Right cardiac atrium (tissue), 5 donors: ENCODE measurements at regions of chr1 and their contacts with region 1.

Region 1: DNA sequence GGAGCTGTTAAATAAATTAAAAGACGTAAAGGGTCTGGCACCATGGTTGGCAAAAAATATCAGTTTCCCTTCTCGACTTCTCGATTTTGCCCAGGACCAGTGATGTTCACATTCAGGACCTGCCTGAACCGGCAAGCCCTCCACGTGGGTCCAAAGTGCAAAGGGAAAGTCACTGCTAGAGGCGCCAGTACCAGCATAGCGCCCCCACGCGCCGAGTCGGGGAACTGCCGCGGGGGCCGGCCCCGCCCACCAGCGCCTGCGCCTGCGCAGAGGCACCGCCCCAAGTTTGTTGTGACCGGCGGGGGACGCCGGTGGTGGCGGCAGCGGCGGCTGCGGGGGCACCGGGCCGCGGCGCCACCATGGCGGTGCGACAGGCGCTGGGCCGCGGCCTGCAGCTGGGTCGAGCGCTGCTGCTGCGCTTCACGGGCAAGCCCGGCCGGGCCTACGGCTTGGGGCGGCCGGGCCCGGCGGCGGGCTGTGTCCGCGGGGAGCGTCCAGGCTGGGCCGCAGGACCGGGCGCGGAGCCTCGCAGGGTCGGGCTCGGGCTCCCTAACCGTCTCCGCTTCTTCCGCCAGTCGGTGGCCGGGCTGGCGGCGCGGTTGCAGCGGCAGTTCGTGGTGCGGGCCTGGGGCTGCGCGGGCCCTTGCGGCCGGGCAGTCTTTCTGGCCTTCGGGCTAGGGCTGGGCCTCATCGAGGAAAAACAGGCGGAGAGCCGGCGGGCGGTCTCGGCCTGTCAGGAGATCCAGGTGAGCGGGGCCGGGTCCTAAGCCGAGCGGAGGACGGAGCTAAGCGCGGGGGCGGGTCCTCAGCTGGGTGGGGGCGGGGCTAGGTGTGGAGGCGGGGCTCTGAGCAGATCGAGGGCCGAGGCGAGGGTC is at the start of gene PINK1:
- DNase-seq: peak; percentile 78 to 93 (median 92)
- ATAC-seq: peak; percentile 91 to 93
- H3K4me3 ChIP-seq: peak within 1 kb of the TSS; percentile 95
- H3K27ac ChIP-seq: peak within 1 kb of the TSS; percentile 95
- H3K4me1 ChIP-seq: peaks cover 4% of the 10 kb centered on the region
- H3K27me3 ChIP-seq: no peaks in the 10 kb centered on the region
- total RNA-seq, gene PINK1: 143 to 161 (median 156) TPM

Region 2: GRCh38 chr1:20279509-20279908 is 353.9 kb before region 1 on chr1:
- intact Hi-C with region 1: no loop called
- DNase-seq: no peak
- ATAC-seq: no peak
- H3K4me3 ChIP-seq: no peak overlapping the region
- H3K27ac ChIP-seq: no peak overlapping the region
- H3K4me1 ChIP-seq: peaks cover 2% of the 10 kb centered on the region
- H3K27me3 ChIP-seq: no peaks in the 10 kb centered on the region

Region 3: DNA sequence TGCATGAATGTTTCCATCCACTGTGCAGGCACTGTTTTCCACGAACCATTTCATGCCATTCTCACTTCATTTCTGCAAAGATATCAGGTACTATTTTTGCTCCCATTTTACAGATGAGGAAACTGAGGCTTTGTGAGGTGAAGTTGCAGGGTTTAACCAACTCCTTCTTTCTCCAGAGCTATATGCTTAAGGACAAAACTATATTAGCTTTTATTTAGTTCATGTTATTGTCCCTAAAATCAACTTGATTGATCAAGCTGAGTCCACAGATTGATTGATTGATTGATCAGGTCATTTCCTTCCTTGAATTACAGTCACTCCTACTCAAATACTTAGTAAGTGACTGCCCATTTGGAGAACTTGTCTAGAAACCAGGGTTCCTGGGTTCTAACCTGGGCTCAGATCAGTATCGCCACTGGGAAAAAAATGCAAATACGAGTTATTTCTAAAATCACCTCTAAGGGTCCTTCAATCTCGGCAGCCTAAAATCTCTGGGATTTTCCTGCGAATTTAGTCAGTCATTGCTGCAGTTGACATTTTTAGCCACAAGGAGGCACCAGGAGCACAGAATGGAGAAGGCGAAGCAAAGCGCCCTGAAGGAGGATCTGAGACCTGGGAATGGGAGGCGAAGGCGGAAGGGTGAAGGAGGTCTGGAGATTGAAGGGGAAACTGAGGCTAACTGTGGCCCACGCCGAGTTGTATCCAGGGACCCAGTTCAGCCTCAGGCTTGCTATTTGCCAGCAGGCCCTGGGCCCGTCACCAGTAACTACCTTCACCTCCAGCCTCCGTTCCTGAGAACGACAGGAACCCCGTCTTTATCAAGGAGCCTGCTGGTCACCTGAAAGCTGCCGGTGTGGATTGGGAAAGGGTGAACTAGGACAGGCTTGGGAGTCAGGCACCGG is 111.2 kb before region 1 on chr1:
- intact Hi-C with region 1: loop called in 3 of 4 experiments (anchors 2 to 5 kb)
- DNase-seq: peak; percentile 70 to 84 (median 75)
- ATAC-seq: peak; percentile 70 to 82
- H3K4me3 ChIP-seq: no peak overlapping the region
- H3K27ac ChIP-seq: no peak overlapping the region
- H3K4me1 ChIP-seq: no peaks in the 10 kb centered on the region
- H3K27me3 ChIP-seq: no peaks in the 10 kb centered on the region

Region 4: DNA sequence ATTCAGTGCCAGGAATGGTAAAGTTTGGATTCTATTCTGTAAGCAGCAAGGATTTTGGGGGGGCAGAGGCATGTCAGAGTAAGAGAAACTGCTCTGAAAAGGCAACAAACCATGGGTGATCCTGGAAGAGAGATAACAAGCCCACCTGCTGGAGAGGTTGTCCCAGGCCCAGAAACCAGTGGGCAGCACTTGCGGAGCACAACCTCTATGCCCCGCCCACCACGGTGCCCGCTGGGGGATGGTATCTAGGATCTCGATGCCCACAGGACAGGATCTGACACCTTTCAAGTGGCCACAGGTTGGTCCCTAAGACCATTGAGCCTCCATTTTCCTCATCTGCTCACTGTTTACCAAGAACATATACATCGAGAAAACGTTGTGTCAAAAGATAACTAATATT is 105.2 kb before region 1 on chr1:
- intact Hi-C with region 1: loop called in 3 of 4 experiments (anchors 2 to 5 kb)
- DNase-seq: peak in 1 of 3 donors; percentile 56
- ATAC-seq: no peak
- H3K4me3 ChIP-seq: no peak overlapping the region
- H3K27ac ChIP-seq: no peak overlapping the region
- H3K4me1 ChIP-seq: no peaks in the 10 kb centered on the region
- H3K27me3 ChIP-seq: no peaks in the 10 kb centered on the region

Region 5: GRCh38 chr1:20574686-20575540 is 58.5 kb before region 1 on chr1:
- intact Hi-C with region 1: loop called in 3 of 4 experiments (anchors 5 to 10 kb)
- DNase-seq: peak; percentile 91 to 95 (median 93)
- ATAC-seq: peak; percentile 94 to 95
- H3K4me3 ChIP-seq: no peak overlapping the region
- H3K27ac ChIP-seq: no peak overlapping the region
- H3K4me1 ChIP-seq: no peaks in the 10 kb centered on the region
- H3K27me3 ChIP-seq: no peaks in the 10 kb centered on the region

Region 6: DNA sequence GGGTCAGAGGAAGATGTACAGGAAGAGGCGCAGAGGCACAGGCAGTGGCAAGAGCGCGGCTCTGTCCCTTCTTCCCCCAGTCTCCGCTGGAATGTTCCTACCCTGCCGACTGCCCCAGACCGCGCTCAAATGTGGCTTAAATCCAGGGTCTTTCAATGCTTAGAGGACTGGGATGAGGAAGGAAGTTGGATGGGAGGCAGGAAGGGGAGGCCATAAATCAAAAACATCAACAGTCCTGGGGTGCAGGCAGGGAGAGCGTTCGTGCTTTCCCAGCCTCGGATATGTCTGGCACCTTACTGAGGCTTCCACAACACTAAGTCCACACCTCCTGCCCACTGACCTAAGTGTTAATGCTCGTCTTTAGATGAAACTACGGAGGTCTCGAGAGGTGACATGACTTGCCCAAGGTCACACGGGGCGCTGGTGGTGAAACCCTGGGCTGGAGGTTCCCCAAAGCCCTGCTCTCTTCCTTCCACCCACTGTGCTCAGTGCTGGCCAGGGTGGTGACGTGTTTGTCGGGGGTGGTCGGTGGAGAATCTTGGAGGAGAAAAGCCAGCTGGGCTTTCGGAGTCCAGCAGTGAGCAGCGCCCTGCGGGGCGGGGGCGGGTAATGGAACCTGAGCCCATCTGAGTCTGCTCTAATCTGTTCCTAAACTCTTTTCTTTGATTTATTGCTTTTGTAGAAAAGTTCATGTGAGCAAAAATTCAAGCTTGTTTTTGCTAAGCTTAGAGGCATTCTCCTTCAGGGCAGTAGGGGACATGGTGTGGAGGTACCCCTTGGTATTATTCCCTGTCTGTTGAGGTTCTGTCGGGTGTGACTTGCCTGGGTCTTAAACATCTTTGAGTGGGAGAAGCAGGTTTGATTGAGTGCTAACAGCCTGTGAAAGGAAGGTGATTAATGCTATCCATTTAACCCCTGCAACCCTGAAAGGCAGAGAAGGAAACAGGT is 43.8 kb before region 1 on chr1:
- intact Hi-C with region 1: no loop called
- DNase-seq: peak; percentile 80 to 83 (median 81)
- ATAC-seq: peak; percentile 66 to 78
- H3K4me3 ChIP-seq: peak overlapping the region; percentile 2
- H3K27ac ChIP-seq: peak overlapping the region; percentile 52
- H3K4me1 ChIP-seq: peaks cover 3% of the 10 kb centered on the region
- H3K27me3 ChIP-seq: no peaks in the 10 kb centered on the region

Region 7: GRCh38 chr1:20682571-20683236 is 49.3 kb after region 1 on chr1:
- intact Hi-C with region 1: no loop called
- DNase-seq: no peak
- ATAC-seq: no peak
- H3K4me3 ChIP-seq: no peak overlapping the region
- H3K27ac ChIP-seq: no peak overlapping the region
- H3K4me1 ChIP-seq: peaks cover 3% of the 10 kb centered on the region
- H3K27me3 ChIP-seq: no peaks in the 10 kb centered on the region